Left ventricle myocardium inferior (tissue), 1 donor: ENCODE measurements at regions of chr2 and their contacts with region 1.

Region 1: GRCh38 chr2:233443468-233444183 is 89.3 kb downstream of the DGKD start:
- DNase-seq: peak; percentile 77
- H3K4me3 ChIP-seq: no peak overlapping the region
- H3K27ac ChIP-seq: no peak overlapping the region
- H3K4me1 ChIP-seq: peaks cover 30% of the 10 kb centered on the region
- H3K27me3 ChIP-seq: no peaks in the 10 kb centered on the region
- CTCF ChIP-seq: peak; percentile 82

Region 2: DNA sequence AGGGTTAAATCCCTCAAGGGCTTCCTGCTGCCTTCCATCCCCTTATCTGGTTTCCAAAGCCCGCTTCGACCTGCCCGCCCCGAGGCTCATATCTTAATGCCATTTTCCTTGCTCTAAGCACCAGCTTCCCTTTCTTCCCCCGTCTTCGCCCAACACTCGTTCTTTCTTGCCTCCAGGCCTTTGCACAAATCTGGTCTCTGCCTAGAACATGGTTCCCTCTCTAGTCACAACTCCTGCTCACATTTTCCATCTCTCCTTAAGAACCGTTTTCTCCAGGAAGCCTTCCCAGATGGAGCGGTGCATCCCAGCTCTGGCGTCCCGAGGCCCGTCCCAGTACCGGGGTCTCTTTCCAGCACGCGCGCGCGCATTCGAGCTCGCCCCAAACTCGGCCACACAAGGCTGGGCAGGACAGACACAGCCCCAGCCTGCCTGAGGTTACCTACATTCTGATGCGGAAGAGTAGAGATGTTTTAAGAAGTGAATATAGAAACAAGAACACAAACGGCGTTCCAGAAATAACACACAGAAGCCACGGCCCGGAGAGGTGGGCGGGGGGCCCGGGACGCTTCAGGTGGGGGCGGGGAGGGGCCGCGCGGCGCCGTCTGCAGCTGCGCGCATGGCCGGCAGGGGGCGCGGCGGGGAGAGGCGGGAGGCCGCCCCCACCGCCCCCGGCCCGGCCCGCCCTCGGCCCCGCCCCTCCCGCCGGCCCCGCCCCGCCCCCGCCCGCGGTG is 89.7 kb before region 1 on chr2 and contains the start of gene DGKD:
- intact Hi-C with region 1: loop called (anchors 2 kb)
- DNase-seq: peak; percentile 54
- H3K4me3 ChIP-seq: peak within 1 kb of the TSS; percentile 79
- H3K27ac ChIP-seq: peak within 1 kb of the TSS; percentile 57
- H3K4me1 ChIP-seq: peaks cover 55% of the 10 kb centered on the region
- H3K27me3 ChIP-seq: no peaks in the 10 kb centered on the region
- CTCF ChIP-seq: peak; percentile 35
- total RNA-seq, gene DGKD: 41.7 TPM

Region 3: DNA sequence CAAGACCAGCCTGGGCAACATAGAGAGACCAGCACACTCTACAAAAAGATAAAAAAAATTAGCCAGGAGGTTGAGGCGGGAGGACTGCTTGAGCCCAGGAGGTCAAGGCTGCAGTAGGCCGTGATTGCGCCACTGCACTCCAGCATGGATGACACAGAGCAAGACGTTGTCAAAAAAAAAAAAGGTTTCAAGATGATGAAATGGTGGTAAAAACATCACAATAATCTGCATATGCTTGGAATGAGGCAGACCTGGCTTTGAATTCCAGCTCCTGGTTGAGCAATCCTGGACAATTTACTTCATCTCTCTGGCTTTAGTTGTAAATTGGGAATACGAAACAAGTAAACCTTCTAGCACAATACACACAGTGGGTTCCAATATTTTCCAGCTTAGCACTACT is 98.9 kb after region 1 on chr2:
- intact Hi-C with region 1: no loop called
- DNase-seq: no peak
- H3K4me3 ChIP-seq: no peak overlapping the region
- H3K27ac ChIP-seq: no peak overlapping the region
- H3K4me1 ChIP-seq: peaks cover 12% of the 10 kb centered on the region
- H3K27me3 ChIP-seq: no peaks in the 10 kb centered on the region
- CTCF ChIP-seq: no peak

Region 4: GRCh38 chr2:233566141-233566960 is 122.7 kb after region 1 on chr2 and contains the start of gene USP40:
- intact Hi-C with region 1: no loop called
- DNase-seq: peak; percentile 87
- H3K4me3 ChIP-seq: peak within 1 kb of the TSS; percentile 85
- H3K27ac ChIP-seq: peak within 1 kb of the TSS; percentile 94
- H3K4me1 ChIP-seq: peaks cover 24% of the 10 kb centered on the region
- H3K27me3 ChIP-seq: no peaks in the 10 kb centered on the region
- CTCF ChIP-seq: no peak
- total RNA-seq, gene USP40: 20.0 TPM